ENCODE measurements at regions of chr10 and their contacts with region 1.

Region 1: GRCh38 chr10:62244780-62245467 is 23.7 kb downstream of the RTKN2 start:
- DNase-seq: peak; percentile 83
- H3K4me3 Mint-ChIP-seq: peak overlapping the region; percentile 79
- H3K27ac Mint-ChIP-seq: no peak overlapping the region
- H3K4me1 Mint-ChIP-seq: peaks cover 20% of the 10 kb centered on the region
- H3K27me3 Mint-ChIP-seq: no peaks in the 10 kb centered on the region
- CTCF ChIP-seq: peak; percentile 53

Region 2: DNA sequence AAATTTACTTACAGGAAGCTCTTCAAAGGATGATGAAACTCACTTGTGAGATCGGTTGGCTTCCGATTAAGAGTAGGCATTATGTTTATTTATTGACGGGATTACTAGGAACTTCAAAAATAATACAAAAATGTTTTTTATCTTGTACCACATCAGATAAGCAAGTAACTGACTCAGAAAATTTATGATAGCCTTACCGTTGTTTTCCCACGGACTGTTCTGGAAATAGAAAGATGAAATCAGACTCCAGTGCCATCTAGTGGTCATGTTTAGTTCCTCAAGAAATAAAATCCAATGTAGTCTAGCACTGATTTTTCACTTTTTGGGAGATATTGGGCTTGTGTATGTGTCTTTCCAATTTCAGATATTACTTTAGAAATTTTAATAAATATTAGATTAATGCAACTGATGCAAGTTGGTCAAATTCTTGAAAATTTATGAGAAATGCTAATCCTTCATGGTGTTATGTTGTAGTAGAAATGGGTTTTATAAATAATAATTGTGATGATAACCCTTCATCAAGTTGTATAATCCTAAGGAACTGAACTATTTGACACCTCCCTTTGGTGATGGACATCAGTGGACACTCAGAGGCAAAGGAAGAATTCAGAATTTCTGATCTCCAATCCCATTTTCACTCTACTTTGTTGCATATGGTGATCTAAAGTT is 960.6 kb before region 1 on chr10:
- CTCF ChIA-PET with region 1: no interaction called
- POLR2A ChIA-PET with region 1: no interaction called
- intact Hi-C with region 1: loop called (anchors 10 kb)
- DNase-seq: peak; percentile 63
- H3K4me3 Mint-ChIP-seq: no peak overlapping the region
- H3K27ac Mint-ChIP-seq: no peak overlapping the region
- H3K4me1 Mint-ChIP-seq: peaks cover 7% of the 10 kb centered on the region
- H3K27me3 Mint-ChIP-seq: no peaks in the 10 kb centered on the region
- CTCF ChIP-seq: peak; percentile 53

Region 3: GRCh38 chr10:61786728-61787127 is 458.2 kb before region 1 on chr10:
- CTCF ChIA-PET with region 1: no interaction called
- POLR2A ChIA-PET with region 1: no interaction called
- intact Hi-C with region 1: no loop called
- DNase-seq: peak; percentile 56
- H3K4me3 Mint-ChIP-seq: peak overlapping the region; percentile 35
- H3K27ac Mint-ChIP-seq: peak overlapping the region; percentile 35
- H3K4me1 Mint-ChIP-seq: peaks cover 22% of the 10 kb centered on the region
- H3K27me3 Mint-ChIP-seq: no peaks in the 10 kb centered on the region
- CTCF ChIP-seq: no peak

Region 4: GRCh38 chr10:61992671-61993668 is 252.0 kb before region 1 on chr10:
- CTCF ChIA-PET with region 1: interaction called, 4 read pairs
- POLR2A ChIA-PET with region 1: interaction called, 10 read pairs
- intact Hi-C with region 1: no loop called
- DNase-seq: peak; percentile 90
- H3K4me3 Mint-ChIP-seq: peak overlapping the region; percentile 75
- H3K27ac Mint-ChIP-seq: peak overlapping the region; percentile 96
- H3K4me1 Mint-ChIP-seq: peaks cover 38% of the 10 kb centered on the region
- H3K27me3 Mint-ChIP-seq: no peaks in the 10 kb centered on the region
- CTCF ChIP-seq: no peak

Region 5: GRCh38 chr10:62050893-62051433 is 194.0 kb before region 1 on chr10:
- CTCF ChIA-PET with region 1: interaction called, 20 read pairs
- POLR2A ChIA-PET with region 1: interaction called, 53 read pairs
- intact Hi-C with region 1: no loop called
- DNase-seq: peak; percentile 90
- H3K4me3 Mint-ChIP-seq: peak overlapping the region; percentile 84
- H3K27ac Mint-ChIP-seq: peak overlapping the region; percentile 96
- H3K4me1 Mint-ChIP-seq: peaks cover 28% of the 10 kb centered on the region
- H3K27me3 Mint-ChIP-seq: no peaks in the 10 kb centered on the region
- CTCF ChIP-seq: no peak

Region 6: DNA sequence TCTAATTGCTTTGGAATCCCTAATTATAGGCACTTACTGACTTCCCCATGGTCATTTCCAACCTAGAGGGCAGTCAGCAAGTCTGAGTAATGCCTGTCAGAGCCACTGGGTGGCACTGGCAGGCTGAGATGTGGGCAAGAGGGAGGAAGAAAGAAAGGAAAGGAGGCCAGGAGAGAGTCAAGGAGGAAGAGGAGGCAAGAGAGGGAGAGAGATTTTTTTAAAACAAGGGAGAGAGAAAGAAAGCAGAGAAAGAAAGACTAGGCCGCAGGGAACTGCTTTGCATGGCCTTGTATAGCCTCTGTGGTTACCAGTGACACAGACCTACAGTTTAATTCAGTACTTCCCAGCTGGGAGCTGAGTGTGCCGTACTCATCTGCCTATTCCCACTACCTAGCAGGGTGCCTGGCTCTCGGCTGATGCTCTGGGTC is 349.2 kb after region 1 on chr10:
- CTCF ChIA-PET with region 1: no interaction called
- POLR2A ChIA-PET with region 1: interaction called, 5 read pairs
- intact Hi-C with region 1: loop called (anchors 2 kb)
- DNase-seq: peak; percentile 64
- H3K4me3 Mint-ChIP-seq: no peak overlapping the region
- H3K27ac Mint-ChIP-seq: no peak overlapping the region
- H3K4me1 Mint-ChIP-seq: peaks cover 6% of the 10 kb centered on the region
- H3K27me3 Mint-ChIP-seq: no peaks in the 10 kb centered on the region
- CTCF ChIP-seq: peak; percentile 87

Region 7: DNA sequence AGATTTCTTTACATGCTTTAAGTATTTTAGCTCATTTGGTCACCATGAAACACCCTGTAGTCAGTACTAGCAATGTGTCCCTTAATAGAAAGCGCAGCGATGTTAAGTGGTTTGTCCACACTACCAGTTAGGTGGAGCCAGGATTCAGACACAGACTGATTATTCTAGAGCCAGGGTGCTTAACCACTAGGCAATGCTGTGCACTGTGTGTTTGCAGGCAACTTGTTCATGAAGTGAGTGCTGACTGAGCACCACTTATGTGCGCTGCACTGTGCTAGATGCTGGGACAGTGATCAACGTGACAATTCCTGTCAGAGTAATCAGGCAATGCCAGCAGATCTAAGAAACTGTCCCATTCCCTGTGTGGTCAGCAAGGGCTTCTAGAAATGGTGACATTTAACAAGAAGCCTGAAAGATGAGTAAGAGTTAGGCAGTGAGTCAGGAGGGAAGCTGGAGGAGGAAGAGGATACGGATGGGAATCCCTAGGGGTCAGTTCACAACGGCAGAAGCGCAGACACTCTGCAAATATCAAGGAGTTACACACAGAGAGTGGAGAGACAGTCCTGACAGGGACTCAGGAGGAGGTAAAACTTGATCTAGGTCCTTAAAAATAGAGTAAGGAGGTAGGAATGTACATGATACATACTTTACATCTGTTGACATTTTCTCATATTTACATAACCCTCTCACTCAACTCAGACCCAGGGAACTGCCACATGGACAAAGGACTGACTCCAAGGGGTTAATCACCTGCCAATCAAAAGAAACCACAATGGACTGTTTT is 641.0 kb after region 1 on chr10:
- CTCF ChIA-PET with region 1: no interaction called
- POLR2A ChIA-PET with region 1: no interaction called
- intact Hi-C with region 1: no loop called
- DNase-seq: peak; percentile 31
- H3K4me3 Mint-ChIP-seq: no peak overlapping the region
- H3K27ac Mint-ChIP-seq: peak overlapping the region; percentile 33
- H3K4me1 Mint-ChIP-seq: peaks cover 5% of the 10 kb centered on the region
- H3K27me3 Mint-ChIP-seq: peaks cover 44% of the 10 kb centered on the region
- CTCF ChIP-seq: no peak